A673 (cell line): ENCODE measurements at regions of chr7 and their contacts with region 1.

Region 1: DNA sequence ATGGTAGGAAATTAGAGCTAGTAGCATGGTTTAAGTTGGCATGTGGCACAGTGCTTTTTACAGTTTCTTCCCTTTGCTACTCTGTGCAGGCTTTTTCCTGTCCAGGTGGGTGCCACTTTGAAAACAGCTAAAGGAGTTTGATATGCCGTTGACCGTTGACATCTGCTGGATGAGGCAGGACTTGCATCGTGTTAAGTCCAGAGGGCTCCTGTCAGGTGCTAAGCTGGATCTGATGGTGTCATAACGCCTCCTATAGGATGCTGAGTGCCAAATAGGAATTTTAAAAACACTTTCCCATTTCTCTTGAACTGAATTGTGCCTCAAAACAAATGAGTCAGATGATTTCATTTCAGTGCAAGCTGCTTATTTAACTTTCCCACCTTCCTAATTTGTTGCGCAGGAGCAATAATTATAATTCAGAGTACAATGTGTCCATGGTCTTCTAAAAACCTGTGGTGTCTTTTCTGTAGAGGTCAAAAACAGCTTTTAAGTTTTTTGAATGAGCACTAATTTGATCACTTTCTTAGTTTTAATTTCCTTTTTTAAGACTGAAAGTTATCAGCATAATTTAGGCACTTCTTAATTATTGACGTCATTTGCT is 178.3 kb downstream of the CDCA7L start:
- DNase-seq: peak; percentile 77
- H3K4me3 ChIP-seq: no peak overlapping the region
- H3K27ac ChIP-seq: no peak overlapping the region
- H3K4me1 ChIP-seq: peaks cover 8% of the 10 kb centered on the region
- H3K27me3 ChIP-seq: peaks cover 95% of the 10 kb centered on the region
- CTCF ChIP-seq: peak; percentile 71

Region 2: GRCh38 chr7:20778063-20778721 is 989.2 kb before region 1 on chr7:
- CTCF ChIA-PET with region 1: no interaction called
- POLR2A ChIA-PET with region 1: no interaction called
- intact Hi-C with region 1: loop called (anchors 5 kb)
- DNase-seq: peak; percentile 56
- H3K4me3 ChIP-seq: peak overlapping the region; percentile 37
- H3K27ac ChIP-seq: no peak overlapping the region
- H3K4me1 ChIP-seq: peaks cover 6% of the 10 kb centered on the region
- H3K27me3 ChIP-seq: peaks cover 98% of the 10 kb centered on the region
- CTCF ChIP-seq: peak; percentile 69

Region 3: DNA sequence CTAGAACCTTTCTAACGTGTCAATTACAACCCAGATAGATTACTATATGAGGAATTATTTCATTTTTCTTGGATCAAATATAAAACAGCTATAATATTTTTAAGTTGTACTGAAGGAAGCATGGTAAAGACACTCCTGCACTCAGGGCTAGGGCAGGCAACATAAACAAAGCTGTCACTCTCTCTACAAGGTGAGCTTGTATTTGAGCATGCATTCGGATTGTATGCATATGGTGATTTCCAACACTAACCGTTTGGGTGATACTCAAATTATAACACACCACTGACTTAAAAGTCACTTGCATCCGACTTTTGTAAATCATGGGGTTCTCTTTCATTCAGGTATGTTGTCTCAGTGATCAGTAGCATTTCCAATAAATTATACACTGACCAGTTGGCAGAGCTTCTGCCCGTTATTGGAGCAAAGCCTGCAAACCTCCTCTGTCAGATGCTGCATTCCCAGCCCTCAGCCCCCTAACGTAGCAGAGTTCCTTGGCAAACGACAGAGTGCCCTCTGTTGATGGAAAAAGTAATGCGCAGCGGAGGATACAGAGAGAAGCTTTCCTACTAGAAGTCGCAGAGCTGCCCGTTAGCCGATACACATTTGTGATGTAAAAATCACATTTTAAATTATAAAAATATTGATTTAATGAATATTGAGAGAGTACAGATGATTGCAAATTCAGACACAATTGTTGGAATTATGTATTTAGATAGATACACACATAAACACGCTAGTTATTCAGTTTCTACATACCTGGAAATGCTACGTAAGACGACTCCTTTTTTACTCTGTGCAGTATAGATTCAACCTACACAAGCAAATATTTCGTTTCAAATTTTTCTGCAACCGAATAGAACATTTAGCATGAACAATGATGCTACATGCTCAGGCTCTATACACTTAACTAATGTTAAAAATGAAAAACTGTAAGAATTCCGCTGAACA is 513.4 kb before region 1 on chr7:
- CTCF ChIA-PET with region 1: interaction called, 3 read pairs
- POLR2A ChIA-PET with region 1: no interaction called
- intact Hi-C with region 1: loop called (anchors 5 kb)
- DNase-seq: peak; percentile 76
- H3K4me3 ChIP-seq: no peak overlapping the region
- H3K27ac ChIP-seq: no peak overlapping the region
- H3K4me1 ChIP-seq: no peaks in the 10 kb centered on the region
- H3K27me3 ChIP-seq: peaks cover 87% of the 10 kb centered on the region
- CTCF ChIP-seq: peak; percentile 74

Region 4: GRCh38 chr7:21912305-21912704 is 144.9 kb after region 1 on chr7:
- CTCF ChIA-PET with region 1: interaction called, 5 read pairs
- POLR2A ChIA-PET with region 1: no interaction called
- intact Hi-C with region 1: loop called (anchors 5 kb)
- DNase-seq: peak; percentile 53
- H3K4me3 ChIP-seq: no peak overlapping the region
- H3K27ac ChIP-seq: peak overlapping the region; percentile 59
- H3K4me1 ChIP-seq: peaks cover 29% of the 10 kb centered on the region
- H3K27me3 ChIP-seq: peaks cover 13% of the 10 kb centered on the region
- CTCF ChIP-seq: no peak